Thyroid gland (tissue), 4 donors: ENCODE measurements at regions of chr6 and their contacts with region 1.

Region 1: GRCh38 chr6:83514866-83515466 is 2.6 kb downstream of the PRSS35 start:
- DNase-seq: peak in 1 of 2 donors; percentile 5
- H3K4me3 ChIP-seq: no peak overlapping the region
- H3K27ac ChIP-seq: no peak overlapping the region
- H3K4me1 ChIP-seq: no peaks in the 10 kb centered on the region
- H3K27me3 ChIP-seq: no peaks in the 10 kb centered on the region
- CTCF ChIP-seq: peak; percentile 44 to 87 (median 75)
- POLR2A ChIP-seq: no peak

Region 2: GRCh38 chr6:82270881-82271645 is 1243.9 kb before region 1 on chr6:
- intact Hi-C with region 1: loop called (anchors 10 kb)
- DNase-seq: no peak
- H3K4me3 ChIP-seq: no peak overlapping the region
- H3K27ac ChIP-seq: no peak overlapping the region
- H3K4me1 ChIP-seq: no peaks in the 10 kb centered on the region
- H3K27me3 ChIP-seq: no peaks in the 10 kb centered on the region
- CTCF ChIP-seq: peak in 5 of 6 experiments; percentile 11 to 64 (median 53)
- POLR2A ChIP-seq: no peak

Region 3: DNA sequence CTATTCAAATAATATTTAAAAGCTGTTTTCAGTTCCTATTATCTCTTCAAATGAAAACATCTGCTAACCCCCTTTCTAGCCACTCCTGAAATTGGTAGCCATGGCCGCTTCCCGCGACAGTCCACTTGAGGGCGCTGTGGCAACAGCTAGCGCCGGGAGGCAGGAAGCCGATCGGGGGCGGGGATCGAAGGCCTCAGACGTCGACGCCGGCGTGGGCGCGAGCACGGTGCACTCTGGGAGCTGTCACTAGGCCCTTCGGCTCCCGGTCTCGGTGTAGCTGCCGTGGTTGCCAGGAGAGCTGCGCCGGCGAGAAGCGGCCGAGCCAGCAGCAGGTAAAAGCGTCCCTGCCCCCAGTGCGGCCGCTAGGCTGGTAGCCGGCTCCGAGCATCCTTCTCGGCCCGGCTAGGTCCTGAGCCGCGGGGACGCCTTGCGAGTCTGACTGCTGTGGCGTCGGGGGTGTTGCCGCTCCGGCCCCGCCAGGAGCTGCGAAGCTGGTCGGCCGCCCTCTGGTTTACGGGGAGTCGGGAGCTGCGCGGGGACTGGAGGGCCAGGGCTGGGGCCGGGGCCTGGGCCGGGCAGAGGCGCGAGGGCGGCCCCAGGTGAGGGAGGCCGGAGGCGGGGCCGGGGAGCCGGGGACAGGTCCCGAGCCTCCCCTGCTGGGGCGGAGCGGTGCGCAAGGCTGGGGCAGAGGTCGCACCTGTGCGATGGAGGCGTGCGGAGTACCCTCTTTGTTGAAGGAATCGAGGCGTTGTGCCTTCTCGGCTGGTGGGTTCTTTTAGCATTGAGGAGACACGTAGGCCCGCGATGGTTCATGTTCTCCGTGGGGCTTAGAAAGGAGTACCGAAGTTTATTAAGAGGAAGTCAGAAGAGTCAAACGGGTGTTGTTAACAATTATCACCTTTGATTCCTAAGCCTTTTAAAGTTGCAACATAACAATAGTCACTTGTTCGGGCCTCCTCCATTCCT is 447.2 kb before region 1 on chr6 and contains the start of gene DOP1A:
- intact Hi-C with region 1: loop called (anchors 10 kb)
- DNase-seq: peak; percentile 98 to 99
- H3K4me3 ChIP-seq: peak within 1 kb of the TSS; percentile 38 to 90 (median 80)
- H3K27ac ChIP-seq: peak within 1 kb of the TSS; percentile 70 to 91 (median 86)
- H3K4me1 ChIP-seq: peaks cover 18 to 32% of the 10 kb centered on the region in 2 donors
- H3K27me3 ChIP-seq: no peaks in the 10 kb centered on the region
- CTCF ChIP-seq: peak; percentile 81 to 97 (median 92)
- POLR2A ChIP-seq: peak in 1 of 2 donors; percentile 85
- total RNA-seq, gene DOP1A: 31.6 to 58.4 (median 54.2) TPM

Region 4: DNA sequence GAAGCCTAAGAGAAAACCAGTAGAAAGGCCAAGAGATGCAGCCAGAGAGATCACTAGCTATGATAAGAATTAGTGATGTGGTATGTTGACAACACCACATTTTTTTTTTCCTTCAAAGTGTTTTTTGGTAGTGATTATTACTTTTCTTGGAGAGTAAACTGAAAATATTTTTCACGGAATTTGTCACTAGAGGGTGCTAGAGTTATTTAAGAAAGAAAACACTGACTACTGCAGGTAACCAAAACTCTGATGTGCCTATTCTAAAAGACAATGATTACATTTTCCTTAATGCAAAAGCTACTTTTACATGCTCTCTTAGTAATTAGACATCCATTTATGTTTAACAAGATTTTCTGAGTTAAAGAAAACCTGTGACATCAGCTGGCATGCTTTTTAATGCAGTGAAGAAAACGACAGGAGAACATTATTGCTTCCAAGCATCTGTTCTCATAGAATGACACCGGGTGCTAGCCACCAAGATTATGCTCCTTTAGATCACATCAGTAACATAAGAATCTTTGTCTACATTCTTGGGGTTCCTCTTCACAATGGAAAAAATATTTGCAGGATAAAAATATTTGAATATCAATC is 293.0 kb before region 1 on chr6:
- intact Hi-C with region 1: loop called (anchors 5 kb)
- DNase-seq: no peak
- H3K4me3 ChIP-seq: no peak overlapping the region
- H3K27ac ChIP-seq: no peak overlapping the region
- H3K4me1 ChIP-seq: no peaks in the 10 kb centered on the region
- H3K27me3 ChIP-seq: no peaks in the 10 kb centered on the region
- CTCF ChIP-seq: peak in 5 of 6 experiments; percentile 7 to 53 (median 49)
- POLR2A ChIP-seq: no peak

Region 5: DNA sequence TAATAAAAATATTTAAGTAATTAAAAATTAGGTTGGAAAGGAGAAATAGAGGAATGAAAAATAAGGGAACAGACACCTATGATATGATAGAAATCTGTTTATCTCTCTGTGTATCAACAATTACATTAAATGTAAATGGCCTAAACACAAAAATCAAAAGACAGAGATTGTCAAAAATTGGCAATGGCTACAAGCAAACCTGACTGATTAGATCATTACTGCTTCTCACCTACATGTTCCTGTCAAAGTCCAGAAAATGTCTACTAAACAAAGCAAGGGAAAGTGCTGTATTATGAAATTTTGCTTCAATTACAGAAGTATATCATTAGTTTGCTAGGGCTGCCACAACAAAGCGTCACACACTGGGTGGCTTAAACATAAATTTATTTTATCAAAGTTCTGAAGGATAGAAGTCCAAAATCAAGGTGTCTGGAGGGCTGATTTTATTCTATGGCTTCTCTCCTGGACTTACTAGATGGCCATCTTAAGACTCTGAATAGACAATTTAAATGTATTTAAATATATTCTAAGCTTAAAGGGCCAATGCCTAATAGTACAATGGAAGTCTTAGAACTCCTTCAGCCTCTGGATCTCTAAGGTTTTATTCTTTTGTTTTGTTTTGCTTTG is 90.5 kb before region 1 on chr6:
- intact Hi-C with region 1: loop called (anchors 5 kb)
- DNase-seq: no peak
- H3K4me3 ChIP-seq: no peak overlapping the region
- H3K27ac ChIP-seq: no peak overlapping the region
- H3K4me1 ChIP-seq: no peaks in the 10 kb centered on the region
- H3K27me3 ChIP-seq: no peaks in the 10 kb centered on the region
- CTCF ChIP-seq: no peak
- POLR2A ChIP-seq: no peak